ENCODE measurements at regions of chr9 and their contacts with region 1.

Region 1: GRCh38 chr9:76987594-76988200 is 31.8 kb upstream of the FOXB2 start:
- DNase-seq: peak; percentile 38
- ATAC-seq: peak; percentile 84
- H3K4me3 ChIP-seq: no peak overlapping the region
- H3K27ac ChIP-seq: no peak overlapping the region
- H3K4me1 ChIP-seq: no peaks in the 10 kb centered on the region
- H3K27me3 ChIP-seq: no peaks in the 10 kb centered on the region
- CTCF ChIP-seq: peak; percentile 61

Region 2: GRCh38 chr9:76756268-76756640 is 231.4 kb before region 1 on chr9:
- CTCF ChIA-PET with region 1: no interaction called
- POLR2A ChIA-PET with region 1: no interaction called
- in situ Hi-C with region 1: no loop called
- intact Hi-C with region 1: loop called (anchors 5 kb)
- DNase-seq: no peak
- ATAC-seq: peak; percentile 84
- H3K4me3 ChIP-seq: no peak overlapping the region
- H3K27ac ChIP-seq: no peak overlapping the region
- H3K4me1 ChIP-seq: no peaks in the 10 kb centered on the region
- H3K27me3 ChIP-seq: no peaks in the 10 kb centered on the region
- CTCF ChIP-seq: peak; percentile 56

Measured in Panc1 (cell line).